B cell (primary cell): ENCODE measurements at regions of chr2 and their contacts with region 1.

Region 1: DNA sequence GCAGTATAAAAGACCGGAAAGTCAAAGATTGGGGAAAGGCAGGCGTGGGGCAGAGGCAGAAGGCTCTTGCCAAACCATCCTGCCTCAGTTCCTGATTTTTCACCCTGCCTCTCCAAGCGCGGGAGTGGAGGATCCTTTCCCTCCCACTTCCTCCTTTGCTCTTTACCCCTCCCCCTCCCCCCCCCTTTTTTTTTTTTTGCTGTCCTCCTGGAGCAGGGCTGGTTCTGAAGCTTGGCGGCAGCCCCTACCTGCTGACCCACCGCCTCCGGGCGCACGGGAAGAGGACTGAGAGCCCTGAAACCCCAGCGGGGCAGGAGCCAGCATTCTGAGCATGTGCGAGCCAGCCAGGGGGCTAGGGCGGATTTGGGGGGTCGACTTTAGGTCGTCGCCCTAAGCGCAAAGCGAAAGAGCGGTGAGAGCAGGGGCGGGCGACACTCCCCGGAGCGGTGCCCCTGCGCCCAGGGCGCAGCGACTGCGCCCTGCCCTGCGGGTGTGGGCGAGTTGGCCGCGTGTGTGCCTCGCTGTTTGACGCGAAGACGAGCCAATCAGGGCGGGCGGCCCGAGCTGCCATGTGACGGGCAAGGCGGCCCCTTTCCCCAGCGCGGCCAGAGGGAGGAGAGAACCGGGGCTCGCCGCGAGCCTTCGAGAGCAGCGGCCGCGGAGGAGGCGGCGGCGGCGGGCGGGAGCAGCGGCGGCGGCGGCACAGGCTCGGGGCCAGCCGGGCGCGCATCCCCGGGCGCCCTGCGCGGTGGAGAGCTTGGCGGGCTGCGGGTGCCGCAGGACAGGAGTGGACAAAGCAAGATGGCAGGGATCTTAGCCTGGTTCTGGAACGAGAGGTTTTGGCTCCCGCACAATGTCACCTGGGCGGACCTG is at the start of gene CERS6:
- DNase-seq: peak; percentile 89
- ATAC-seq: peak; percentile 95
- H3K4me3 ChIP-seq: peak within 1 kb of the TSS; percentile 65 to 82 (median 71)
- H3K4me3 Mint-ChIP-seq: no peak within 1 kb of the TSS
- H3K27ac ChIP-seq: peak within 1 kb of the TSS in 1 of 2 donors; percentile 52
- H3K27ac Mint-ChIP-seq: peak within 1 kb of the TSS; percentile 81
- H3K4me1 ChIP-seq: peaks cover 16% of the 10 kb centered on the region in 2 donors
- H3K4me1 Mint-ChIP-seq: peaks cover 26% of the 10 kb centered on the region
- H3K27me3 ChIP-seq: no peaks in the 10 kb centered on the region
- H3K27me3 Mint-ChIP-seq: no peaks in the 10 kb centered on the region
- CTCF ChIP-seq: no peak
- total RNA-seq, gene CERS6: 5.5 and 6.0 TPM in 2 replicates

Region 2: DNA sequence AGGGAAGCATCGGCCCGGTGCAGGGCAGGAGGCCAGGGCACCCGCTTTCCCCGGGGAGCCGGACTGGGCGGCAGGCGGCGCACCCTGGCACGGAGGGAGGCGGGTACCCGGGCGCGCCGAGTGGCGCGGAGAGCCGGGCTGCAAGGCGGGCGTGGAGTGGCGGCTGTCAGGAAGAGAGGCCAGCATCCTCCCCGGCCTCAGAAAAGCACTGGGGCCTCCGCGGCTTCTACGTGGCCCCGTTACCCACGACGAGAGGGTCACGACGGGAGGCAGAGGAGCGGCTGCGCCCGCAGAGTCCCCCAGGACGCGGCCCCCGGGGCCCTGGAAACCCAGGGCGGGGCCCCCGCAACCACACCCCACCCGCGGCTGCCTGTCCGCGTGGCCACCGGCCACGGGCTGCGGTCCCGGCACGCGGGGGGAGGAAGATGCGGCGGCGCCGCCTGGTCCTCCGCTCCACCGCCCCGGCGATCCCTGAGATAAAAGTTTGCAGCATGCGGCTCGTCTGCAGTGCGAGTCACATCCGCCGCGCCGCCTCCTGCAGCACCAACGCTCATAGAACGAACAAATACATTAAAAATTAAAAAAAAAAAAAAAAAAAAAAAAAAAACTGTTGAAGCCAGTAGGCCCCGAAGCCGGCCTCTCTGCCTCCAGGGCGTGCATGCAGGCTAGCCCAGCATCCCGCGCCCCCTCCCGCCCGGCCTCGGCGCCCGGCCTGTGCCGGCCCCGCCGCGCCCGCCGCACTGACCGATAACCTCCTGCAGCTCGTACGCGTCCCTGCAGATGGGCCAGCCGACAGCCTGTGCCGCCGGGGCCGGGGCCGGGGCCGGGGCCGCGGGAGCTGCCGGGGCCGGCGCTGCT is 209.2 kb before region 1 on chr2:
- CTCF ChIA-PET with region 1: no interaction called
- POLR2A ChIA-PET with region 1: no interaction called
- intact Hi-C with region 1: loop called (anchors 10 kb)
- DNase-seq: peak; percentile 83
- ATAC-seq: peak; percentile 49
- H3K4me3 ChIP-seq: peak overlapping the region; percentile 2 to 74 (median 68)
- H3K4me3 Mint-ChIP-seq: peak overlapping the region; percentile 93
- H3K27ac ChIP-seq: peak overlapping the region; percentile 23 to 70
- H3K27ac Mint-ChIP-seq: peak overlapping the region; percentile 93
- H3K4me1 ChIP-seq: peaks cover 7 to 23% of the 10 kb centered on the region in 2 donors
- H3K4me1 Mint-ChIP-seq: peaks cover 31% of the 10 kb centered on the region
- H3K27me3 ChIP-seq: no peaks in the 10 kb centered on the region
- H3K27me3 Mint-ChIP-seq: no peaks in the 10 kb centered on the region
- CTCF ChIP-seq: peak; percentile 28

Region 3: GRCh38 chr2:168466819-168467565 is 11.1 kb after region 1 on chr2:
- CTCF ChIA-PET with region 1: interaction called, 3 read pairs
- POLR2A ChIA-PET with region 1: no interaction called
- intact Hi-C with region 1: loop called (anchors 1 kb)
- DNase-seq: no peak
- ATAC-seq: no peak
- H3K4me3 ChIP-seq: peak overlapping the region in 1 of 5 experiments; percentile 9
- H3K4me3 Mint-ChIP-seq: peak overlapping the region; percentile 61
- H3K27ac ChIP-seq: no peak overlapping the region
- H3K27ac Mint-ChIP-seq: peak overlapping the region; percentile 8
- H3K4me1 ChIP-seq: peaks cover 35 to 41% of the 10 kb centered on the region in 2 donors
- H3K4me1 Mint-ChIP-seq: peaks cover 53% of the 10 kb centered on the region
- H3K27me3 ChIP-seq: no peaks in the 10 kb centered on the region
- H3K27me3 Mint-ChIP-seq: no peaks in the 10 kb centered on the region
- CTCF ChIP-seq: no peak

Region 4: GRCh38 chr2:168530982-168531622 is 75.2 kb after region 1 on chr2:
- CTCF ChIA-PET with region 1: no interaction called
- POLR2A ChIA-PET with region 1: no interaction called
- intact Hi-C with region 1: loop called (anchors 5 kb)
- DNase-seq: peak; percentile 14
- ATAC-seq: peak; percentile 54
- H3K4me3 ChIP-seq: peak overlapping the region in 1 of 5 experiments; percentile 33
- H3K4me3 Mint-ChIP-seq: peak overlapping the region; percentile 68
- H3K27ac ChIP-seq: peak overlapping the region in 1 of 2 donors; percentile 33
- H3K27ac Mint-ChIP-seq: peak overlapping the region; percentile 74
- H3K4me1 ChIP-seq: peaks cover 35 to 40% of the 10 kb centered on the region in 2 donors
- H3K4me1 Mint-ChIP-seq: peaks cover 59% of the 10 kb centered on the region
- H3K27me3 ChIP-seq: no peaks in the 10 kb centered on the region
- H3K27me3 Mint-ChIP-seq: no peaks in the 10 kb centered on the region
- CTCF ChIP-seq: no peak

Region 5: DNA sequence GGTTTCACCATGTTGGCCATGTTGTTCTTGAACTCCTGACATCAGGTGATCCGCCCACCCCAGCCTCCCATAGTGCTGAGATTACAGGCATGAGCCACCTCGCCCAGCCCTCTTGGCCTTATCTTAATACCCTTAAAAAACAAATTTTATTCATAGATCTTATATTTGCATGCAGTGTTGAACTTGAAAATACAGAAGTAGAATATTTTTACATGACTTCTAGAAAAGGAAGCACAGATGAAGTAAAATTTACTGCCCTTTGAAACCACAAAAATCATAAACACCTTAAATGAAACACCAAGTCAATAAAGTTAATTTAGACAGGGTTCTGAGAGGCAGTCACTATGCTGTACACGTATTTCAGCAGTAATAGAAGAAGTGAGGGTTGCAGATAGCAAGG is 145.9 kb after region 1 on chr2:
- CTCF ChIA-PET with region 1: no interaction called
- POLR2A ChIA-PET with region 1: no interaction called
- intact Hi-C with region 1: loop called (anchors 5 kb)
- DNase-seq: peak; percentile 47
- ATAC-seq: peak; percentile 66
- H3K4me3 ChIP-seq: peak overlapping the region in 1 of 5 experiments; percentile 23
- H3K4me3 Mint-ChIP-seq: peak overlapping the region; percentile 72
- H3K27ac ChIP-seq: peak overlapping the region in 1 of 2 donors; percentile 42
- H3K27ac Mint-ChIP-seq: peak overlapping the region; percentile 39
- H3K4me1 ChIP-seq: peaks cover 34 to 38% of the 10 kb centered on the region in 2 donors
- H3K4me1 Mint-ChIP-seq: peaks cover 61% of the 10 kb centered on the region
- H3K27me3 ChIP-seq: no peaks in the 10 kb centered on the region
- H3K27me3 Mint-ChIP-seq: no peaks in the 10 kb centered on the region
- CTCF ChIP-seq: no peak

Region 6: GRCh38 chr2:168712049-168712448 is 256.2 kb after region 1 on chr2:
- CTCF ChIA-PET with region 1: no interaction called
- POLR2A ChIA-PET with region 1: no interaction called
- intact Hi-C with region 1: loop called (anchors 5 kb)
- DNase-seq: peak; percentile 62
- ATAC-seq: peak; percentile 97
- H3K4me3 ChIP-seq: peak overlapping the region in 1 of 5 experiments; percentile 3
- H3K4me3 Mint-ChIP-seq: peak overlapping the region; percentile 57
- H3K27ac ChIP-seq: peak overlapping the region; percentile 34 to 61
- H3K27ac Mint-ChIP-seq: peak overlapping the region; percentile 81
- H3K4me1 ChIP-seq: peaks cover 11 to 15% of the 10 kb centered on the region in 2 donors
- H3K4me1 Mint-ChIP-seq: peaks cover 13% of the 10 kb centered on the region
- H3K27me3 ChIP-seq: no peaks in the 10 kb centered on the region
- H3K27me3 Mint-ChIP-seq: no peaks in the 10 kb centered on the region
- CTCF ChIP-seq: peak; percentile 22

Region 7: DNA sequence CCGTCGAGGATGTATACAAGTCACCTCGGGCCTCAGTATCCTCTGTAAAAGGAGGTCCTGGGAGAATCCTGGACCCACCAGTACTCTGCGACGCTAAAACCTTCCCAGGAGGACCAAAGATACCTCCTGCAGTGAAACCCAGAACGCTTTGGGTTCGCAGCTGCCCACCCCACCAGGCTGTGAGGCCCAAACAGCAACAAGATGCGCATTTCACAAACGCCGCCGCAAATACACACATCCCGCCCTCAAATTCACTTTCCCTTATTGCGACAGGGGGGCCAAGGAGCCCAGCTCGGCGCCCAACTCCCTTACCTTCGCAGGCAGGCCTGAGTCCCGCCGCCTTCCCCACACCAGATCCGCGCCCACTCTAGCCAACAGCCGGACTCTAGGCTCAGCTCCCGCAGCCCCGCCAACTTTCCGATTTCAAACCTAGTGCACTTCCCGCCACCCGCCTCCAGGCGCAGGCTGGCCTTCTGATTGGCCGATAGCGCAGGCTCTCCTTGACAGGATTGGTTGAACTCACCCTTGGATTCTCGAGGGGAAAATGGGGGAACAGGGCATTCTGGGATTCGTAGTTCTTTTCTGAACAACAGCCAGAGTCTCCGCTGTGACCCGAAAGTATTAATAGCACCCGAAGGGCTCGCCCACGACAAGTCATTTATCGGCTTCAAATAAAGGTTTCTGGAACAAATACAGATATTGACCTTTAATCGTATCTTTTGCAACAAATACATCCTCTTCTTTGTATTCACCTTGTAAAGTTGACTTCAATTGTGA is 434.3 kb after region 1 on chr2 and contains the start of gene SPC25:
- CTCF ChIA-PET with region 1: no interaction called
- POLR2A ChIA-PET with region 1: no interaction called
- intact Hi-C with region 1: loop called (anchors 5 kb)
- DNase-seq: peak; percentile 89
- ATAC-seq: peak; percentile 99
- H3K4me3 ChIP-seq: peak within 1 kb of the TSS; percentile 50 to 77 (median 57)
- H3K4me3 Mint-ChIP-seq: peak within 1 kb of the TSS; percentile 98
- H3K27ac ChIP-seq: no peak within 1 kb of the TSS
- H3K27ac Mint-ChIP-seq: peak within 1 kb of the TSS; percentile 57
- H3K4me1 ChIP-seq: peaks cover 8 to 12% of the 10 kb centered on the region in 2 donors
- H3K4me1 Mint-ChIP-seq: peaks cover 9% of the 10 kb centered on the region
- H3K27me3 ChIP-seq: peaks cover 0 to 7% (median 2%) of the 10 kb centered on the region in 4 experiments
- H3K27me3 Mint-ChIP-seq: peaks cover 11% of the 10 kb centered on the region
- CTCF ChIP-seq: no peak
- total RNA-seq, gene SPC25: 0.22 and 0.64 TPM in 2 replicates